Mammary epithelial cell (primary cell): ENCODE measurements at regions of chr9 and their contacts with region 1.

Region 1: DNA sequence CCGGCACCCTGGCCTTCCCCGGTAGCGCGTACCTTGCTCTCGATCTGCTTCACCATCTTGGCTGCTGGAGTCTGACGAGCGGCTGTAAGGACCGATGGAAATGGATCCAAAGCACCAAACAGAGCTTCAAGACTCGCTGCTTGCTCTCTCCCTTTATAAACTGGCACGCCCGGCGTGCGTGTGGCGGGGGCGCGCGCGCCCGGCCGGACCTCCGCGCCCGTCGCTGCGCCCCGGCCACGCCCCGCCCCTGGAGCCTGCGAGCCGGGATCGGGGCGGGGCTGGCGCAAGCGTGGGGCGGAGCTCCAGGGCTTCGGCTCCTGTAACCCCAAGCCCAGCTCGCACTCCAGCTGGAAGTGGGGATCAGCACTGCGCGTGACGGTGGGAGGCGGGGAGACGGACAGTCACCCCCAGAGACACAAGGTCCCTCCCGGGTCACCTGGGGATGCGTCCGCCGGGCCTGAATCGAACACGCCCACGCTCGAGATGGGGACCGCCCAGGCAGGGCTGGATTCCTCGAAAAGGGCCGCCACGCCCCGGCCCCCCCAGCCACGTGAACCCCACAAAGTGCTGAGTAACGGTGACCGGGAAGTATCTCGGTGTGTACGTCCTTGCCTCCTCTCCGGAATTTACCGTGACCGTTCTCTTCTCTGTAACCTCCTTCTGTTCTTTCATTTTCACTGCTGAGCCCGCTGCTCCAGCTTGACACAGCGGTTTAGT is at the start of gene TXN:
- DNase-seq: peak; percentile 95
- H3K4me3 ChIP-seq: peak within 1 kb of the TSS; percentile 94 to 97 (median 95)
- H3K27ac ChIP-seq: peak within 1 kb of the TSS; percentile 94
- H3K4me1 ChIP-seq: peaks cover 35% of the 10 kb centered on the region
- H3K27me3 ChIP-seq: no peaks in the 10 kb centered on the region
- CTCF ChIP-seq: no peak
- total RNA-seq, gene TXN: 337 to 532 TPM

Region 2: GRCh38 chr9:110278080-110278707 is 21.7 kb after region 1 on chr9:
- CTCF ChIA-PET with region 1: interaction called, 4 read pairs
- dilution Hi-C with region 1: no loop called
- in situ Hi-C with region 1: no loop called
- intact Hi-C with region 1: loop called (anchors 2 kb)
- DNase-seq: peak; percentile 29
- H3K4me3 ChIP-seq: no peak overlapping the region
- H3K27ac ChIP-seq: peak overlapping the region; percentile 21
- H3K4me1 ChIP-seq: peaks cover 26% of the 10 kb centered on the region
- H3K27me3 ChIP-seq: no peaks in the 10 kb centered on the region
- CTCF ChIP-seq: no peak

Region 3: GRCh38 chr9:110293248-110293647 is 36.7 kb after region 1 on chr9:
- CTCF ChIA-PET with region 1: no interaction called
- dilution Hi-C with region 1: no loop called
- in situ Hi-C with region 1: no loop called
- intact Hi-C with region 1: loop called (anchors 1 kb)
- DNase-seq: peak; percentile 83
- H3K4me3 ChIP-seq: no peak overlapping the region
- H3K27ac ChIP-seq: peak overlapping the region; percentile 12
- H3K4me1 ChIP-seq: peaks cover 28% of the 10 kb centered on the region
- H3K27me3 ChIP-seq: no peaks in the 10 kb centered on the region
- CTCF ChIP-seq: no peak

Region 4: GRCh38 chr9:110399983-110400382 is 143.4 kb after region 1 on chr9:
- CTCF ChIA-PET with region 1: no interaction called
- dilution Hi-C with region 1: no loop called
- in situ Hi-C with region 1: no loop called
- intact Hi-C with region 1: loop called (anchors 5 kb)
- DNase-seq: no peak
- H3K4me3 ChIP-seq: no peak overlapping the region
- H3K27ac ChIP-seq: no peak overlapping the region
- H3K4me1 ChIP-seq: no peaks in the 10 kb centered on the region
- H3K27me3 ChIP-seq: no peaks in the 10 kb centered on the region
- CTCF ChIP-seq: no peak

Region 5: DNA sequence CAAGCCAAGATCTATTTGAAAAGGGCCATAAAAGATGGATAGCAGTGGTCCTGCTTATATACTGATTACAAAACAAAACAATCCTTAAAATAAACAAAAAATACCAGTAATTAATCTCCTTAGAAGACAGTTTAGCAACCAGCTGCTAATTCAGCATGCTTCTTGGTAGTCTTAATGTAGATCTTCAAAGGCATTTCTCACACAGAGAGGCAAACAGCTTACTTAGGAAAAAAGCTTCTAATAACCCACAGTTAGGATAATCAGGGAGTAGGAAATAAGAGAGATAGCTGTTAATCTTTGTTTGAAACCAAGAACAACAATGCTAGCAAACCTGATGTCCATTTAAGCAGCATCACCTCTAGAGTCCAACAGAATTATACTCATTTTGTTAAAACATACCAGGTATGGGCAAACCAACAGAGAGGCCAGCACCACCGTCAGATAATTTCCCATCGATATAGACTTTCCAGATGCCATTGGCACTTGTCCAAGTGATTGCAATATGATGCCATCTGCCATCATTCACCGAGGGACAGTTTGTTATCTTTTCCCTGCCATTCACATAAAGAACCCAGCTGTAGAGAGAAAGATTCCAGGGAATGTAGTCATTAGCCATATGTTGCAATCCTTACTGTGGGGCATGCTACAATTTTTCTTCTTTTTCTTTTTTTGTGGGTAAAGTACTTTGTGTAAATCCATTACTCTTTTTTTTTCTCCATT is 186.8 kb after region 1 on chr9:
- CTCF ChIA-PET with region 1: no interaction called
- dilution Hi-C with region 1: no loop called
- in situ Hi-C with region 1: no loop called
- intact Hi-C with region 1: loop called (anchors 5 kb)
- DNase-seq: peak; percentile 51
- H3K4me3 ChIP-seq: no peak overlapping the region
- H3K27ac ChIP-seq: no peak overlapping the region
- H3K4me1 ChIP-seq: peaks cover 18% of the 10 kb centered on the region
- H3K27me3 ChIP-seq: no peaks in the 10 kb centered on the region
- CTCF ChIP-seq: no peak

Region 6: DNA sequence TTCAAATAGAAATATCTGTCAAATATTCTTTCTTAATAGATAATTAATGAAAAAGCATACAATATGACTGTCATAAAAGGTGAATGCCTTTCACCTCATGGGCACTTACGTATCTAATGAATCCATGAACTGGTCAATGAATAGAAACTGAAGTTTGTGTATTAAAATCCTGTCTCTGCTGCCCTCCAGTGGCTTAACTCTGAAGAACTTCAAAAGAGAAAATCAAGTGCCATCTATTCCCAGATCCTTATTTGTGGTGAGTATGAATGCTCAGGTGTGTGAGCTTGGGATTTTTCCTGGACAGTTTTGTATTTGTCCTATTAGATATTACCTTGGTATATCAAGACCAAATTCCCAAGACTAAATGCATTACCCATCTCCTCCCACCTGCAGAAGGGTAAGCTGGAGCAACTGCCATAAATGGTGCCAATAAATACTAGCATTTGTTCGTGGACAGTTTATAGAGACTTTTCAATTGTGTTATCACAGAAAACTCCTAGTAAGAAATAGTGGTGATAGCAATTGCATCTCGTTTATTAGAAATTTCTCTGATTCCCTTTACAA is 367.0 kb after region 1 on chr9:
- CTCF ChIA-PET with region 1: no interaction called
- dilution Hi-C with region 1: no loop called
- in situ Hi-C with region 1: no loop called
- intact Hi-C with region 1: loop called (anchors 1 kb)
- DNase-seq: peak; percentile 45
- H3K4me3 ChIP-seq: no peak overlapping the region
- H3K27ac ChIP-seq: no peak overlapping the region
- H3K4me1 ChIP-seq: no peaks in the 10 kb centered on the region
- H3K27me3 ChIP-seq: no peaks in the 10 kb centered on the region
- CTCF ChIP-seq: peak; percentile 37 to 58